ENCODE measurements at regions of chr5 and their contacts with region 1.

Region 1: GRCh38 chr5:126937771-126938170 is 92.6 kb downstream of the MARCHF3 start:
- DNase-seq: no peak
- ATAC-seq: no peak
- H3K4me3 ChIP-seq: no peak overlapping the region
- H3K4me3 Mint-ChIP-seq: no peak overlapping the region
- H3K27ac ChIP-seq: no peak overlapping the region
- H3K27ac Mint-ChIP-seq: no peak overlapping the region
- H3K4me1 ChIP-seq: no peaks in the 10 kb centered on the region
- H3K4me1 Mint-ChIP-seq: no peaks in the 10 kb centered on the region
- H3K27me3 ChIP-seq: no peaks in the 10 kb centered on the region
- H3K27me3 Mint-ChIP-seq: no peaks in the 10 kb centered on the region

Region 2: DNA sequence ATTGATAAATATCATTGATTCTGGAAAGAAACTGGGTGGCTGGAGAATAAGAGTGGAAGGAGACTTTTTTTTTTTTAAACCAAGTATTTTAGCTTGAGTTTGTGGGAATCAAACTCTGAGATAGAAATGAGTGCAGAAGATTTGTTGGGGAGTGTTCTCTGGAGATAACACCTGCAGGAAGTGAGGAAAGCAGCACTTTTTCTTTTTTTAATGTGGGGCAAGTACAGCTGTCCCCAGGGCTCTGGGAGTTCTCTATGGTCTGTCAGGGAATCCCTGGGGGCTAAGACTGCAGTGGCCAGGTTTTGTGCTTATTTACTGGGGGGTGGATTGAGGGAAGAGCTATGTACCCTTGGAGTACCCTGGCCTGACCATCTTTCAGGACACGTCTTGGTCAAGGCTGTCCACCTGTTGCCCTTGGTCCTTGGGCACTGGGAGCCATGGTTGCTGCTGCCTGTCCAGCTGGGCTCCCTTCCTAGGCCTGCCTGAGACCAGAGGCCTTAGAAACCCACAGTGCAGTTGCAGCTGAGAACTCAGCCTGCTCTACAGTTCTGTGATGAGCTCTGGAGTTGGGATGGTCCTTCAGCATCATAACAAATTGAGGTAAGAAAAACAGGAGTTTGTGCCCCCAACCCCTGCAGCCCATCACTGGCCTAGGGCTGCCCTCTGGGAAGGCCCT is 251.2 kb before region 1 on chr5:
- CTCF ChIA-PET with region 1: no interaction called
- POLR2A ChIA-PET with region 1: no interaction called
- DNase-seq: no peak
- ATAC-seq: no peak
- H3K4me3 ChIP-seq: no peak overlapping the region
- H3K4me3 Mint-ChIP-seq: no peak overlapping the region
- H3K27ac ChIP-seq: no peak overlapping the region
- H3K27ac Mint-ChIP-seq: no peak overlapping the region
- H3K4me1 ChIP-seq: peaks cover 0 to 7% of the 10 kb centered on the region in 2 experiments
- H3K4me1 Mint-ChIP-seq: peaks cover 0 to 7% (median 6%) of the 10 kb centered on the region in 3 donors
- H3K27me3 ChIP-seq: peaks cover 0 to 9% of the 10 kb centered on the region in 2 experiments
- H3K27me3 Mint-ChIP-seq: peaks cover 0 to 3% of the 10 kb centered on the region in 2 donors

Region 3: GRCh38 chr5:126865299-126865698 is 72.5 kb before region 1 on chr5:
- CTCF ChIA-PET with region 1: no interaction called
- POLR2A ChIA-PET with region 1: interaction called in 1 of 2 experiments, 11 read pairs
- DNase-seq: no peak
- ATAC-seq: no peak
- H3K4me3 ChIP-seq: no peak overlapping the region
- H3K4me3 Mint-ChIP-seq: no peak overlapping the region
- H3K27ac ChIP-seq: no peak overlapping the region
- H3K27ac Mint-ChIP-seq: no peak overlapping the region
- H3K4me1 ChIP-seq: peaks cover 7 to 8% of the 10 kb centered on the region in 2 experiments
- H3K4me1 Mint-ChIP-seq: peaks cover 10 to 16% (median 11%) of the 10 kb centered on the region in 3 donors
- H3K27me3 ChIP-seq: no peaks in the 10 kb centered on the region
- H3K27me3 Mint-ChIP-seq: no peaks in the 10 kb centered on the region

Region 4: GRCh38 chr5:126988021-126988569 is 50.3 kb after region 1 on chr5:
- CTCF ChIA-PET with region 1: no interaction called
- POLR2A ChIA-PET with region 1: no interaction called
- DNase-seq: peak in 31 of 35 experiments; percentile 6 to 73 (median 38)
- ATAC-seq: peak; percentile 85 to 97 (median 89)
- H3K4me3 ChIP-seq: no peak overlapping the region
- H3K4me3 Mint-ChIP-seq: peak overlapping the region; percentile 59 to 66 (median 64)
- H3K27ac ChIP-seq: peak overlapping the region; percentile 52
- H3K27ac Mint-ChIP-seq: peak overlapping the region; percentile 94 to 95
- H3K4me1 ChIP-seq: peaks cover 16 to 19% of the 10 kb centered on the region in 2 experiments
- H3K4me1 Mint-ChIP-seq: peaks cover 35 to 53% (median 50%) of the 10 kb centered on the region in 3 donors
- H3K27me3 ChIP-seq: no peaks in the 10 kb centered on the region
- H3K27me3 Mint-ChIP-seq: no peaks in the 10 kb centered on the region

Measured in T-cell (primary cell).